CD8-positive, alpha-beta T cell (primary cell): ENCODE measurements at regions of chr3 and their contacts with region 1.

Region 1: GRCh38 chr3:39288300-39288808 is 8.5 kb upstream of the CX3CR1 start:
- DNase-seq: peak; percentile 64 to 92 (median 78)
- ATAC-seq: peak; percentile 96
- H3K4me3 ChIP-seq: no peak overlapping the region
- H3K4me3 Mint-ChIP-seq: no peak overlapping the region
- H3K27ac ChIP-seq: peak overlapping the region in 1 of 2 experiments; percentile 41
- H3K27ac Mint-ChIP-seq: peak overlapping the region; percentile 20
- H3K4me1 ChIP-seq: peaks cover 6% of the 10 kb centered on the region
- H3K4me1 Mint-ChIP-seq: peaks cover 15% of the 10 kb centered on the region
- H3K27me3 ChIP-seq: no peaks in the 10 kb centered on the region
- H3K27me3 Mint-ChIP-seq: no peaks in the 10 kb centered on the region
- CTCF ChIP-seq: peak; percentile 82

Region 2: DNA sequence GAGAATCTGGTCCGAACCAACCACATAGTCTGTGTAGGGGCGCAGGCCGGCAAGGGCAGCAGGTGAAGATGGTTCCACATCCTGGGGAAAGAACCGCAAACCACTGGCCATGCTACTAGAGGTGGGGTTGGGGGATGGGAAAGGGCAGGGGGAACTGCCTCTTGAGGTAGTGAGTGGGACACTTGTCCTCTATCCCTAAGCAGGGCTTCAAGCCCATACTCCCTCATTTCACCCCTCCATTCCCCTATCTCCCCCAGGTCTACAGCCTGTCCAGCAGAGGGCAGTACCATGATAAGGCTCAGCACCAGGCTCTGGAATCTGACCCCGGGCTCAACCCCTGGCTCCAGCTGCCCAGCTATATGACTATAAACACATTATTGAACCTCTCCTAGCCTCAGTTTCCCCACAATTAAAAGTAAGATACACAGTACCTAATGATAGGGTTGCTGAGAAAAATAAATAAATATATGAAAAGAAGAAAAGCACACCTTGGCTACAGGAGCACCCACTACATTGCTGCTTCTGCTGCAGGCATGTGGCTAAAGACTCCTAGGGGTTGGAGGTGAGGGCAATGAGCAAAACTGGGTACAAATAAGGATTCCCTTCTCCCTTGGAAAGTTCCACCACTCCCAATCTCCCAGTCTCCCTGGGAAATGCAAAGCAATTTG is 187.2 kb before region 1 on chr3:
- CTCF ChIA-PET with region 1: interaction called, 198 read pairs
- POLR2A ChIA-PET with region 1: no interaction called
- intact Hi-C with region 1: loop called (anchors 1 kb)
- DNase-seq: peak in 8 of 9 experiments; percentile 31 to 76 (median 58)
- ATAC-seq: peak; percentile 74
- H3K4me3 ChIP-seq: no peak overlapping the region
- H3K4me3 Mint-ChIP-seq: no peak overlapping the region
- H3K27ac ChIP-seq: no peak overlapping the region
- H3K27ac Mint-ChIP-seq: peak overlapping the region; percentile 55
- H3K4me1 ChIP-seq: peaks cover 8% of the 10 kb centered on the region
- H3K4me1 Mint-ChIP-seq: peaks cover 34% of the 10 kb centered on the region
- H3K27me3 ChIP-seq: no peaks in the 10 kb centered on the region
- H3K27me3 Mint-ChIP-seq: no peaks in the 10 kb centered on the region
- CTCF ChIP-seq: peak; percentile 66

Region 3: GRCh38 chr3:39126532-39127071 is 161.8 kb before region 1 on chr3:
- CTCF ChIA-PET with region 1: interaction called, 189 read pairs
- POLR2A ChIA-PET with region 1: no interaction called
- intact Hi-C with region 1: loop called (anchors 1 kb)
- DNase-seq: peak in 4 of 9 experiments; percentile 41 to 59 (median 47)
- ATAC-seq: peak; percentile 49
- H3K4me3 ChIP-seq: no peak overlapping the region
- H3K4me3 Mint-ChIP-seq: no peak overlapping the region
- H3K27ac ChIP-seq: no peak overlapping the region
- H3K27ac Mint-ChIP-seq: no peak overlapping the region
- H3K4me1 ChIP-seq: peaks cover 16% of the 10 kb centered on the region
- H3K4me1 Mint-ChIP-seq: peaks cover 27% of the 10 kb centered on the region
- H3K27me3 ChIP-seq: no peaks in the 10 kb centered on the region
- H3K27me3 Mint-ChIP-seq: no peaks in the 10 kb centered on the region
- CTCF ChIP-seq: no peak

Region 4: GRCh38 chr3:39174751-39175426 is 113.5 kb before region 1 on chr3:
- CTCF ChIA-PET with region 1: interaction called, 36 read pairs
- POLR2A ChIA-PET with region 1: no interaction called
- intact Hi-C with region 1: no loop called
- DNase-seq: no peak
- ATAC-seq: no peak
- H3K4me3 ChIP-seq: no peak overlapping the region
- H3K4me3 Mint-ChIP-seq: no peak overlapping the region
- H3K27ac ChIP-seq: no peak overlapping the region
- H3K27ac Mint-ChIP-seq: peak overlapping the region; percentile 2
- H3K4me1 ChIP-seq: peaks cover 19% of the 10 kb centered on the region
- H3K4me1 Mint-ChIP-seq: peaks cover 24% of the 10 kb centered on the region
- H3K27me3 ChIP-seq: no peaks in the 10 kb centered on the region
- H3K27me3 Mint-ChIP-seq: no peaks in the 10 kb centered on the region
- CTCF ChIP-seq: no peak

Region 5: DNA sequence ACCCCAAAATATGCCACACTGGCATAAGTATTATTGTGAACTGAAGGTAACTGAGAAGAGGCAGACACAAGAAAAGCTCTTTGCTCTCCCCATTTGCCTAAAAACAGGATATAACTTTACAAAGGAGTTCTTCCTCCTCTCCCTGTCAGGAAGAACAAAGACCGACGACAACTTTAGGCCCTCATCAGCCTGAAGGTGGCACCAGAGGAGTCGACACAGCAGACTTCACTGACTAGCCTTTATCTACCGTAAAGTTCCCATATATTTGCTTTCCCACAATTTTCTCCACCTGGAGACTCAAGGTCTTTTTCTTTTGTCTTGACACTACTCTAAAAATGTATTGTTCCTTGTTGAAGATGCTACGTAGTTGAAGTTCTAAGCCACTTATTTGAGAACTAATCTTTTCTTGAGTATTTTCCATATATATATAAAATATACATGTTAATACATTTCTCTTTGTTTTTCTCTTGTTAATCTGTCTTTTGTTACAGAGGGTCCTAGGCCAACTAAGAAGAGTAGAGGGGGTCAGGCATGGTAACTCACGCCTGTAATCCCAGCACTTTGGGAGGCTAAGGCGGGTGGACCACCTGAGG is 79.8 kb before region 1 on chr3:
- CTCF ChIA-PET with region 1: interaction called, 396 read pairs
- POLR2A ChIA-PET with region 1: no interaction called
- intact Hi-C with region 1: loop called (anchors 1 kb)
- DNase-seq: peak in 5 of 9 experiments; percentile 20 to 78 (median 41)
- ATAC-seq: no peak
- H3K4me3 ChIP-seq: no peak overlapping the region
- H3K4me3 Mint-ChIP-seq: no peak overlapping the region
- H3K27ac ChIP-seq: peak overlapping the region in 1 of 2 experiments; percentile 14
- H3K27ac Mint-ChIP-seq: no peak overlapping the region
- H3K4me1 ChIP-seq: peaks cover 7% of the 10 kb centered on the region
- H3K4me1 Mint-ChIP-seq: peaks cover 6% of the 10 kb centered on the region
- H3K27me3 ChIP-seq: no peaks in the 10 kb centered on the region
- H3K27me3 Mint-ChIP-seq: peaks cover 2% of the 10 kb centered on the region
- CTCF ChIP-seq: peak; percentile 44

Region 6: GRCh38 chr3:39267631-39268548 is 20.5 kb before region 1 on chr3:
- CTCF ChIA-PET with region 1: interaction called, 74 read pairs
- POLR2A ChIA-PET with region 1: interaction called, 3 read pairs
- intact Hi-C with region 1: no loop called
- DNase-seq: peak; percentile 35 to 95 (median 64)
- ATAC-seq: peak; percentile 87
- H3K4me3 ChIP-seq: peak overlapping the region in 1 of 2 experiments; percentile 18
- H3K4me3 Mint-ChIP-seq: peak overlapping the region; percentile 30
- H3K27ac ChIP-seq: peak overlapping the region; percentile 42 to 86
- H3K27ac Mint-ChIP-seq: peak overlapping the region; percentile 89
- H3K4me1 ChIP-seq: peaks cover 22% of the 10 kb centered on the region
- H3K4me1 Mint-ChIP-seq: peaks cover 26% of the 10 kb centered on the region
- H3K27me3 ChIP-seq: no peaks in the 10 kb centered on the region
- H3K27me3 Mint-ChIP-seq: no peaks in the 10 kb centered on the region
- CTCF ChIP-seq: no peak

Region 7: GRCh38 chr3:39383045-39383880 is 94.9 kb after region 1 on chr3 and contains the start of gene SLC25A38:
- CTCF ChIA-PET with region 1: interaction called, 36 read pairs
- POLR2A ChIA-PET with region 1: no interaction called
- intact Hi-C with region 1: loop called (anchors 2 to 5 kb)
- DNase-seq: peak; percentile 58 to 93 (median 78)
- ATAC-seq: peak; percentile 79
- H3K4me3 ChIP-seq: peak within 1 kb of the TSS; percentile 81 to 98
- H3K4me3 Mint-ChIP-seq: peak within 1 kb of the TSS; percentile 99
- H3K27ac ChIP-seq: peak within 1 kb of the TSS; percentile 91 to 97
- H3K27ac Mint-ChIP-seq: peak within 1 kb of the TSS; percentile 98
- H3K4me1 ChIP-seq: peaks cover 43% of the 10 kb centered on the region
- H3K4me1 Mint-ChIP-seq: peaks cover 50% of the 10 kb centered on the region
- H3K27me3 ChIP-seq: no peaks in the 10 kb centered on the region
- H3K27me3 Mint-ChIP-seq: no peaks in the 10 kb centered on the region
- CTCF ChIP-seq: peak; percentile 39
- total RNA-seq, gene SLC25A38: 64.0 to 65.1 TPM